CD4-positive, alpha-beta T cell (primary cell): ENCODE measurements at regions of chr7 and their contacts with region 1.

Region 1: DNA sequence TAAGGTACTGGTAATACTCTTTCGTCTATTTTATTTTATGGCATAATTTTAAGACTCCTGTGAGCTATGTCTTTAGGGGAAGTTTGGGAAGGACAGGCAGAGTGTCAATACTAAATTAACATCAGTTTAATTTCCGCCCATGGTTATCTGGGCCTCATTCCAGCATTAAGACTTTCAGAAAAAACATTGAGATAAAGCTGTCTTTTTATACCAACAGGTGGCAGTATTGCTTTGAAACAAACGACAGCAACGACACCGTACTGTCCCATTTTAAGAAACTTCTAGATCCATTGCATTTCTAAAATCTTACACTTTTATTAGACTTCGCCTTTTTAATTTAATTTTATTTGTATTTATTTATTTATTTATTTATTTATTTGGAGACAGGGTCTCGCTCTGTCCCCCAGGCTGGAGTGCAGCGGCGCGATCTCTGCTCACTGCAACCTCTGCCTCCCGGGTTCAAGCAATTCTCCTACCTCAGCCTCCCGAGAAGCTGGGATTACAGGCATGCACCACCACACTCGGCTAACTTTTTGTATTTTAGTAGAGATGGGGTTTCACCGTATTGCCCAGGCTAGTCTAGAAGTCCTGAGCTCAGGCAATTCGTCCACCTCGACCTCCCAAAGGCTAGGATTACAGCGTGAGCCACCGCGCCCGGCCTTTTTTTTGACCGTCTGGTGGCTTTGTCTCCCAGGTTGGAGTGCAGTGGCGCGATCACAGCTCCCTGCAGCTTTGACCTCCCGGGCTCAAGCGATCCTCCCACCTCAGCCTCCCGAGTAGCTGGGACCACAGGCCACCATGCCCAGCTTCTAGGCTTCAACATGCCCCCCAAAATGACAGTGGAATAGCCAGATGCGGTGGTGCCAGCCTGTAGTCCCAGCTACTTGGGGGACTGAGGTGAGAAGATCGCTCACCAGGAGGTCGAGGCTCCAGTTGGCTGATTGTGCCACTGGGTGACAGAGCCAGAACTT is 78.7 kb upstream of the C1GALT1 start:
- DNase-seq: peak in 4 of 14 experiments; percentile 19 to 82 (median 81)
- ATAC-seq: peak; percentile 75
- H3K4me3 ChIP-seq: no peak overlapping the region
- H3K4me3 Mint-ChIP-seq: no peak overlapping the region
- H3K27ac ChIP-seq: no peak overlapping the region
- H3K27ac Mint-ChIP-seq: no peak overlapping the region
- H3K4me1 ChIP-seq: peaks cover 15% of the 10 kb centered on the region
- H3K4me1 Mint-ChIP-seq: peaks cover 29% of the 10 kb centered on the region
- H3K27me3 ChIP-seq: no peaks in the 10 kb centered on the region
- H3K27me3 Mint-ChIP-seq: no peaks in the 10 kb centered on the region
- CTCF ChIP-seq: peak; percentile 74

Region 2: GRCh38 chr7:6350433-6351058 is 753.1 kb before region 1 on chr7:
- CTCF ChIA-PET with region 1: no interaction called
- POLR2A ChIA-PET with region 1: no interaction called
- intact Hi-C with region 1: no loop called
- DNase-seq: no peak
- ATAC-seq: no peak
- H3K4me3 ChIP-seq: no peak overlapping the region
- H3K4me3 Mint-ChIP-seq: peak overlapping the region; percentile 4
- H3K27ac ChIP-seq: no peak overlapping the region
- H3K27ac Mint-ChIP-seq: no peak overlapping the region
- H3K4me1 ChIP-seq: peaks cover 17% of the 10 kb centered on the region
- H3K4me1 Mint-ChIP-seq: peaks cover 7% of the 10 kb centered on the region
- H3K27me3 ChIP-seq: no peaks in the 10 kb centered on the region
- H3K27me3 Mint-ChIP-seq: peaks cover 10% of the 10 kb centered on the region
- CTCF ChIP-seq: no peak

Region 3: GRCh38 chr7:7201578-7202374 is 98.1 kb after region 1 on chr7:
- CTCF ChIA-PET with region 1: no interaction called
- POLR2A ChIA-PET with region 1: no interaction called
- intact Hi-C with region 1: loop called in 1 of 2 experiments (anchors 5 kb)
- DNase-seq: peak; percentile 14 to 69 (median 32)
- ATAC-seq: peak; percentile 95
- H3K4me3 ChIP-seq: peak overlapping the region; percentile 17
- H3K4me3 Mint-ChIP-seq: peak overlapping the region; percentile 54
- H3K27ac ChIP-seq: peak overlapping the region; percentile 13 to 21
- H3K27ac Mint-ChIP-seq: peak overlapping the region; percentile 80
- H3K4me1 ChIP-seq: peaks cover 15% of the 10 kb centered on the region
- H3K4me1 Mint-ChIP-seq: peaks cover 90% of the 10 kb centered on the region
- H3K27me3 ChIP-seq: no peaks in the 10 kb centered on the region
- H3K27me3 Mint-ChIP-seq: no peaks in the 10 kb centered on the region
- CTCF ChIP-seq: no peak

Region 4: DNA sequence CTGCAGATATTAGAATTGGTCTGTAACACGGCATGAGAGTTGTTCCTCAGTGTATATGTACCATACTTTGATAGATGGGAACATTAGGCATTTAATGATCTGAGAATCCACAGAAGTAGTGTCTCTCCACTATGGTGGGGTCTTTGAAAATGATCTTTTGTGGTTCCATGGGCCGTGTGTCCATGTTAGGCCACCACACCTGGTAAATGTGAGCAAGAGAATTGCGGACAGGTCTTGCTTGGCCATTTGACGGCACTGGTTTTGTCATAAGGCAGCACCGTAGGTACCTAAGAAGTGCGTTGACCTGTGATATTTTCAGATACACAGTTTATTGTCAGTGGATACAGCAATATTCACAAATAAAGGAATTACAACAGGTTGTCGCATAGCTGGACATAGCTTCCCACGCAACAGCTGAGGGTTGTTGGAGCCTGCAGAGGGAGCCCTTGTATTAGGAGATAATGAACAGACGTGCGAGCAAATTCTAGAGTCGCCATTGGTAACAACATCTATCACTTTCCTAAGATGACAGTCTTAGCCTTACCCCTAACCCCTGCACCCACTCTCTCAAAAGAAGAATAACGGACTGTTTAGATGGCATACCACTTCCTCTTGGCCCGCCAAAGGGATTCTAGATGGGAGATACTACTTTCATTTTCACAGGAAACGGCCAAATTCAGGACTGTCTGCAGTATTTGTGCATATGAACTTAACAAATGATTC is 320.7 kb after region 1 on chr7:
- CTCF ChIA-PET with region 1: no interaction called
- POLR2A ChIA-PET with region 1: no interaction called
- intact Hi-C with region 1: loop called in 1 of 2 experiments (anchors 5 kb)
- DNase-seq: peak in 13 of 14 experiments; percentile 5 to 65 (median 19)
- ATAC-seq: peak; percentile 67
- H3K4me3 ChIP-seq: peak overlapping the region; percentile 55
- H3K4me3 Mint-ChIP-seq: peak overlapping the region; percentile 90
- H3K27ac ChIP-seq: no peak overlapping the region
- H3K27ac Mint-ChIP-seq: peak overlapping the region; percentile 19
- H3K4me1 ChIP-seq: no peaks in the 10 kb centered on the region
- H3K4me1 Mint-ChIP-seq: no peaks in the 10 kb centered on the region
- H3K27me3 ChIP-seq: no peaks in the 10 kb centered on the region
- H3K27me3 Mint-ChIP-seq: no peaks in the 10 kb centered on the region
- CTCF ChIP-seq: peak; percentile 56

Region 5: GRCh38 chr7:7569081-7569527 is 465.5 kb after region 1 on chr7:
- CTCF ChIA-PET with region 1: no interaction called
- POLR2A ChIA-PET with region 1: no interaction called
- intact Hi-C with region 1: no loop called
- DNase-seq: peak in 4 of 14 experiments; percentile 7 to 72 (median 62)
- ATAC-seq: peak; percentile 42
- H3K4me3 ChIP-seq: peak overlapping the region; percentile 13
- H3K4me3 Mint-ChIP-seq: peak overlapping the region; percentile 89
- H3K27ac ChIP-seq: peak overlapping the region; percentile 18 to 59
- H3K27ac Mint-ChIP-seq: peak overlapping the region; percentile 87
- H3K4me1 ChIP-seq: peaks cover 29% of the 10 kb centered on the region
- H3K4me1 Mint-ChIP-seq: peaks cover 38% of the 10 kb centered on the region
- H3K27me3 ChIP-seq: no peaks in the 10 kb centered on the region
- H3K27me3 Mint-ChIP-seq: no peaks in the 10 kb centered on the region
- CTCF ChIP-seq: no peak

Region 6: DNA sequence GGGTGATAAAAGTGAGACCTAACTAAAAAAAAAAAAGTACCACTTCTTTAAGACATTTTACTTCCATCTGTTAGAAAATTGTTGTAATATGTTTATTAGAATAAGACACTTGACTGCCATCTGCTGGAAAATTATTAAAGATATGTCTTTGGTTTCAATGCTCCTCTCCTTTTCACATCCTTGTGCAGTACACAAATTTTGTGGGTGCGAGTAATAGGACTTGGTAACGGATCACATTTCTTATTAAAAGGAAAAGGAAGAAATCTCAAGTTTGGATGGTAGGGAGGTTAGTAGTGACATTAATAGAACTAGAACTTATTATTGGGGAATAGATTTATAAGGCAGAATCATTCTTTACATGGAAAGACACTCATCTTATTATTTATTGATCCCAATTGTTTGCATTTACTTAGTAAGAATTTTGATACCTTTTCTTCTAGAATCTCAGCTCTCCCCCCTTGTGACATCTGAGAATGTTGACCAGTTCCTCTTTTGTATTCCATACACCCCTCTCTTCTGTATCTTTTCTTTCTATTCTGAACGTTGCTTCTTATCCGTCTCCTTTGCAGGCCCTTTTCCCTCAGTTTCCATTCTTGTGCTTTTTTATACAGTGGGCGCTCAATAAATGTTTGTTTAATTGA is 657.8 kb after region 1 on chr7:
- CTCF ChIA-PET with region 1: no interaction called
- POLR2A ChIA-PET with region 1: no interaction called
- intact Hi-C with region 1: loop called in 1 of 2 experiments (anchors 5 kb)
- DNase-seq: peak in 3 of 14 experiments; percentile 62 to 75 (median 73)
- ATAC-seq: peak; percentile 27
- H3K4me3 ChIP-seq: peak overlapping the region; percentile 55
- H3K4me3 Mint-ChIP-seq: peak overlapping the region; percentile 94
- H3K27ac ChIP-seq: peak overlapping the region; percentile 31 to 39
- H3K27ac Mint-ChIP-seq: peak overlapping the region; percentile 99
- H3K4me1 ChIP-seq: peaks cover 11% of the 10 kb centered on the region
- H3K4me1 Mint-ChIP-seq: peaks cover 51% of the 10 kb centered on the region
- H3K27me3 ChIP-seq: no peaks in the 10 kb centered on the region
- H3K27me3 Mint-ChIP-seq: no peaks in the 10 kb centered on the region
- CTCF ChIP-seq: peak; percentile 25

Region 7: GRCh38 chr7:8295638-8296361 is 1192.2 kb after region 1 on chr7:
- CTCF ChIA-PET with region 1: interaction called, 3 read pairs
- POLR2A ChIA-PET with region 1: no interaction called
- intact Hi-C with region 1: loop called (anchors 2 to 5 kb)
- DNase-seq: peak in 8 of 14 experiments; percentile 3 to 81 (median 18)
- ATAC-seq: peak; percentile 84
- H3K4me3 ChIP-seq: no peak overlapping the region
- H3K4me3 Mint-ChIP-seq: no peak overlapping the region
- H3K27ac ChIP-seq: no peak overlapping the region
- H3K27ac Mint-ChIP-seq: no peak overlapping the region
- H3K4me1 ChIP-seq: no peaks in the 10 kb centered on the region
- H3K4me1 Mint-ChIP-seq: no peaks in the 10 kb centered on the region
- H3K27me3 ChIP-seq: peaks cover 6 to 7% of the 10 kb centered on the region in 2 experiments
- H3K27me3 Mint-ChIP-seq: peaks cover 13% of the 10 kb centered on the region
- CTCF ChIP-seq: peak; percentile 71